CD8-positive, alpha-beta T cell (primary cell): ENCODE measurements at regions of chr18 and their contacts with region 1.

Region 1: GRCh38 chr18:40197711-40198110 is 1757.3 kb upstream of the PIK3C3 start:
- DNase-seq: no peak
- ATAC-seq: no peak
- H3K4me3 ChIP-seq: no peak overlapping the region
- H3K4me3 Mint-ChIP-seq: no peak overlapping the region
- H3K27ac ChIP-seq: no peak overlapping the region
- H3K27ac Mint-ChIP-seq: no peak overlapping the region
- H3K4me1 ChIP-seq: no peaks in the 10 kb centered on the region
- H3K4me1 Mint-ChIP-seq: no peaks in the 10 kb centered on the region
- H3K27me3 ChIP-seq: no peaks in the 10 kb centered on the region
- H3K27me3 Mint-ChIP-seq: no peaks in the 10 kb centered on the region
- CTCF ChIP-seq: no peak

Region 2: DNA sequence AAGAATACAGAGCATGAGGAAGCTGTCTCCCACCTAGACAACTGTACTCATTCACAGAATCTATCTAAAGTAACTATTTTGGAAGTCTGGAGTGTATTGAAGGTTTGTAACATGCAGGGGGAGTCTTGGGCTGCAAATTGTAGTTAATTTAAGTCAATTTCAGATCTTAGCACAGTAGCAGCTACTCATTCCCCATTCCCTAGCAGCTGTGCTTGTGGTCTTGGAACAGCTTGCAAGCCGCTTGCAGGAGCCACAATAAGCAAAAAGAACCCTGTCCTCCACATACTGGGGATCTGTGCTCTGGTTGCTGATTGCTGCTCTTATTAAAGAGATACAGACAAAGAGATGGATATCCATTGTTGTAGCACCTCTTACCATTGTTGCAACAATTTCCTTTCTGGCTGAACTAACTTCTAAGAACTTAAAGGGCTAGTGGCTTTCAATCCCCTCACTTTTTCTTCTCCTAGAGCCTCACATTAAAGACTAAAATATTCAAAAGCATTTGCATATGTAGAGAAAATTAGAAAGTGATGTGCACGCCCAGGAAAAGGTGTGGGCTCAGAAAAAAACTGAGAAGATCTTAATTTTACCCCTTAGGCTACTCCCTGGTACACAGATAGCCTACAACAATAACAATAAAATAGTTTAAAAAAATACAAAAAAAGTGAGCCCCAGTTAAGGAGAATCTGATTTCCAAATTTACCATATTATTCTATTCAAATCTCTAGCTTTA is 17.8 kb before region 1 on chr18:
- CTCF ChIA-PET with region 1: no interaction called
- POLR2A ChIA-PET with region 1: no interaction called
- intact Hi-C with region 1: loop called in 1 of 2 experiments (anchors 1 kb)
- DNase-seq: no peak
- ATAC-seq: no peak
- H3K4me3 ChIP-seq: no peak overlapping the region
- H3K4me3 Mint-ChIP-seq: no peak overlapping the region
- H3K27ac ChIP-seq: no peak overlapping the region
- H3K27ac Mint-ChIP-seq: no peak overlapping the region
- H3K4me1 ChIP-seq: no peaks in the 10 kb centered on the region
- H3K4me1 Mint-ChIP-seq: no peaks in the 10 kb centered on the region
- H3K27me3 ChIP-seq: no peaks in the 10 kb centered on the region
- H3K27me3 Mint-ChIP-seq: no peaks in the 10 kb centered on the region
- CTCF ChIP-seq: no peak